ENCODE measurements at regions of chr2 and their contacts with region 1.

Region 1: DNA sequence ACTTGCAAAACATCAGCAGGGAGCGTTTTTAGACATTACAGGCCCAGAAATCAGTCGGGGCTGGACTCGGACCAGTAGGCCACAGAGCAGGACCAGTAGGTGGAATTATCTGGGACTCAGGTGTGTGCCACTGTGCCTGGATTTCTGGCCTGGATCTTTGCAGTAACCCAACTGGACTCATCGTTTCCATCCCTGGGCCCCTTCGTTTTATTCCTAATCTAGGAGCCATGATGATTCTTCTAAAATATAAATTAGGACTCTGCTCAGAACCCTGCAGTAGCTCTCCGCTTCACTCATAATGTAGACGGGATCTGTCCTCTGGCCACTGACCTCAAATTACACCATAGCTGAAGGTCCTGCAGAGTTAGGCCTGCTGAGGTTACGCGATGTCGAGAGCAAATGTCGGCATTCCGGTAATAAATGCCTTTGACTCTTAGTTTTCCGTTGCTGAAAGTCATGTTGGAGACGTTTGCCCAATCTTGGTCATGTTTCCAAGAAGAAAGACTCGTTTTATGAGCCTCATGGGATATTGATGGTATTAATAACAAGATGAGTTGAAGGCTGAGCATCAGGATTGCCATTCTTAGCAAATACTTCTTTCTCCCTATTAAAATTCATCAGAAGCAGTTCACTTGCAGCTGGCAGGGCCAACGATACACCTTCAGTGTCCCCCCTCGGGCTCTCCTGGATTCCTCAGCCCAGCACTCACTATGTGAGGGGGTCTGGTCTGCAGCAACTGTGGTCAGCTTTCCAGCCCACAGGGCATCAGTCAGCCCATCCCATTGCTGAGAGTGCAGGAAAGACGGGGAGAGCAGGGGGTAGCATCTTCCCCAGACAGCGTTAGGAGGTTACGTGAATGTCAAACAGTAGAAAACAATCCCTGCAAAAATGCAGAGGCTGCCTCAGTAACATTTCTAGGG is 39.9 kb upstream of the KLF11 start:
- DNase-seq: no peak
- ATAC-seq: no peak
- H3K4me3 ChIP-seq: no peak overlapping the region
- H3K27ac ChIP-seq: no peak overlapping the region
- H3K4me1 ChIP-seq: peaks cover 4% of the 10 kb centered on the region
- H3K27me3 ChIP-seq: no peaks in the 10 kb centered on the region

Region 2: GRCh38 chr2:10036095-10036884 is 32.8 kb after region 1 on chr2:
- intact Hi-C with region 1: loop called in 2 of 4 experiments (anchors 5 kb)
- DNase-seq: peak; percentile 77 to 87 (median 87)
- ATAC-seq: peak; percentile 72 to 73
- H3K4me3 ChIP-seq: no peak overlapping the region
- H3K27ac ChIP-seq: peak overlapping the region; percentile 61
- H3K4me1 ChIP-seq: peaks cover 18% of the 10 kb centered on the region
- H3K27me3 ChIP-seq: no peaks in the 10 kb centered on the region

Region 3: GRCh38 chr2:10204326-10205161 is 201.1 kb after region 1 on chr2:
- intact Hi-C with region 1: no loop called
- DNase-seq: no peak
- ATAC-seq: no peak
- H3K4me3 ChIP-seq: no peak overlapping the region
- H3K27ac ChIP-seq: no peak overlapping the region
- H3K4me1 ChIP-seq: no peaks in the 10 kb centered on the region
- H3K27me3 ChIP-seq: no peaks in the 10 kb centered on the region